ENCODE measurements at regions of chr9 and their contacts with region 1.

Region 1: DNA sequence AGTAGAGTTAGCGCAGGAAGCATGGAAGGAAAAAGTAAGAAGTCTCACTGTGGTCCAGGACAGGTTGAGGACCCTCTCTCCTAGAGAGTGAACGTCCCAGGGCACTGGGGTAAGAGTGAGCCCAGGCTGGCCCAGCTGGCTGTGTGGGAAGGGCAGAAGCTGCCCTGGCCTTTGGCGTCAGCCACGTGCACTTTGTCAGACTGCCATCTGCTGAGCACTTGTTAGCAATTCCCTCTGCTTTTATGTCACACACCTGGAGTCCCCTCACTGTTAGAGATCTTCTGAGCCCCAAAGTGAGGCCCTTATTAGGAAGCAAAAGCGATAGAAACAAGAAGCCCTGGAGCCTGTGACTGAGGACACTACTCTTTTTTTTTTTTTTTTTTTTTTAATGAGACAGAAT is 79.1 kb downstream of the UGCG start:
- DNase-seq: peak; percentile 37
- H3K4me3 Mint-ChIP-seq: no peak overlapping the region
- H3K27ac Mint-ChIP-seq: no peak overlapping the region
- H3K4me1 Mint-ChIP-seq: no peaks in the 10 kb centered on the region
- H3K27me3 Mint-ChIP-seq: no peaks in the 10 kb centered on the region

Region 2: GRCh38 chr9:111759762-111760639 is 215.7 kb before region 1 on chr9:
- CTCF ChIA-PET with region 1: no interaction called
- POLR2A ChIA-PET with region 1: no interaction called
- intact Hi-C with region 1: loop called (anchors 2 kb)
- DNase-seq: peak; percentile 22
- H3K4me3 Mint-ChIP-seq: no peak overlapping the region
- H3K27ac Mint-ChIP-seq: no peak overlapping the region
- H3K4me1 Mint-ChIP-seq: peaks cover 2% of the 10 kb centered on the region
- H3K27me3 Mint-ChIP-seq: no peaks in the 10 kb centered on the region

Region 3: GRCh38 chr9:112180387-112180881 is 204.7 kb after region 1 on chr9:
- CTCF ChIA-PET with region 1: no interaction called
- POLR2A ChIA-PET with region 1: no interaction called
- intact Hi-C with region 1: no loop called
- DNase-seq: peak; percentile 74
- H3K4me3 Mint-ChIP-seq: peak overlapping the region; percentile 6
- H3K27ac Mint-ChIP-seq: peak overlapping the region; percentile 40
- H3K4me1 Mint-ChIP-seq: peaks cover 36% of the 10 kb centered on the region
- H3K27me3 Mint-ChIP-seq: peaks cover 5% of the 10 kb centered on the region